ENCODE measurements at regions of chr3 and their contacts with region 1.

Region 1: DNA sequence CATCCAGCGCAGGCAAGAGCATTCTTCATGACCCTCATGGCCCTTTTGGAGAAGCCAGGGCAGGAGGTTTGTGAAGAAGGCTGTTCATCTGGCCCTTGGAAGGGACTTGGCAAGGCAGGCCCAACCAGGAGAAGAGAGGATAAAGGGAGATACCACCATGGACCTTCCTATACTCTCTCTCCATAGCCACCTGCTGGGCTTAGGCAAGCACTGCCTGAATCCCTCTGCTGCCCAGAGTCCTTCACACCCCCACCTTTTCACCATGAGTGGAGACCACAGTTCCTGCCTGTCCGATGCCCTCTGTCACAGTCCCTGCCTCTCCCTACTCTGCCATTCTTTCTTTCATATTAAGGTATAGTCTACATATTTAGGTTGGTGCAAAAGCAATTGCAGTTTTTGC is 10.6 kb upstream of the SFMBT1 start:
- DNase-seq: peak; percentile 50
- ATAC-seq: peak; percentile 98
- H3K4me3 ChIP-seq: no peak overlapping the region
- H3K27ac ChIP-seq: no peak overlapping the region
- H3K4me1 ChIP-seq: no peaks in the 10 kb centered on the region
- H3K27me3 ChIP-seq: no peaks in the 10 kb centered on the region
- CTCF ChIP-seq: peak; percentile 58

Region 2: GRCh38 chr3:52428151-52429005 is 628.1 kb before region 1 on chr3:
- CTCF ChIA-PET with region 1: no interaction called
- POLR2A ChIA-PET with region 1: interaction called, 15 read pairs
- intact Hi-C with region 1: no loop called
- DNase-seq: peak; percentile 82
- ATAC-seq: peak; percentile 99
- H3K4me3 ChIP-seq: no peak overlapping the region
- H3K27ac ChIP-seq: no peak overlapping the region
- H3K4me1 ChIP-seq: no peaks in the 10 kb centered on the region
- H3K27me3 ChIP-seq: no peaks in the 10 kb centered on the region
- CTCF ChIP-seq: peak; percentile 91

Region 3: GRCh38 chr3:52851348-52851747 is 205.1 kb before region 1 on chr3:
- CTCF ChIA-PET with region 1: no interaction called
- POLR2A ChIA-PET with region 1: no interaction called
- intact Hi-C with region 1: loop called (anchors 2 kb)
- DNase-seq: peak; percentile 51
- ATAC-seq: peak; percentile 80
- H3K4me3 ChIP-seq: no peak overlapping the region
- H3K27ac ChIP-seq: no peak overlapping the region
- H3K4me1 ChIP-seq: no peaks in the 10 kb centered on the region
- H3K27me3 ChIP-seq: no peaks in the 10 kb centered on the region
- CTCF ChIP-seq: peak; percentile 73

Region 4: DNA sequence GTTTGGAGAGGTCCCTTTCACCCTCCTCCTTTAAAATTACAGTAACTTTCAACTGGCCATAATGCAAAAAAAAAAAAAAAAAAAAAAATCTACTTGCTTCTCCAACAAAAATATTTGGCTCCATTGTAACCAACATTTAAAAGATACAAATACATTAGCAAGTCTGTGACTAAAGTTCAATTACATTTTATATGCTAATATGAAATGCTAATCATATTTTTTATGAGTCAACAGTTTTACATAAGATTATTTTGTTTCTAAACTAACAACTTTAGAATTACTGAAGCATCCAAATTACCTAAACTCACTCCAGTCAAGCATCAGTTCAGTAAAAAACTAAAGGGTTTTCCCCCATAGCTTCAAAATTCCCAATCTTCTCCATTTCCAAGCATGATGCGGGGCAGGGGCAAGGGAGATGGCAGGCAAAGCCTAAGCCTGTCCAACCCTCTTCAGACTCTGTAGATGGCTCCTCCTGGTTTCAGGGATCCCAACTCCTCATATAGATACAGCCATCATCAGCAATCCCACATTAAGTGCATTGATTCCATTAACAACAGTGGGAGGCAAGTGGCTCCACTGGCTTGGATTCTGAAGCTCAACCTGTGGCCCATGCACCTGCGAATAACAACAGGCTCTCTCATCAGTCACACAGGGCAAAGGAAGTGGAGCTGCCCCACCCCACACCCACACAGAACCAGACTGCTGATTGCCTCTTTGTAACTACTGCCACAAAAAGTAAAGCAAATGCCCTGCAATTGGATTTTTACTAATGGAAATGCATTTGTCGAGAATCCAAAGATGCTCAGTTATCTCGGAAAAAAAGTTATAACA is 25.6 kb before region 1 on chr3:
- CTCF ChIA-PET with region 1: no interaction called
- POLR2A ChIA-PET with region 1: interaction called, 19 read pairs
- intact Hi-C with region 1: no loop called
- DNase-seq: no peak
- ATAC-seq: peak; percentile 64; the same call in 1 of the 2 replicates
- H3K4me3 ChIP-seq: no peak overlapping the region
- H3K27ac ChIP-seq: no peak overlapping the region
- H3K4me1 ChIP-seq: no peaks in the 10 kb centered on the region
- H3K27me3 ChIP-seq: no peaks in the 10 kb centered on the region
- CTCF ChIP-seq: no peak

Region 5: DNA sequence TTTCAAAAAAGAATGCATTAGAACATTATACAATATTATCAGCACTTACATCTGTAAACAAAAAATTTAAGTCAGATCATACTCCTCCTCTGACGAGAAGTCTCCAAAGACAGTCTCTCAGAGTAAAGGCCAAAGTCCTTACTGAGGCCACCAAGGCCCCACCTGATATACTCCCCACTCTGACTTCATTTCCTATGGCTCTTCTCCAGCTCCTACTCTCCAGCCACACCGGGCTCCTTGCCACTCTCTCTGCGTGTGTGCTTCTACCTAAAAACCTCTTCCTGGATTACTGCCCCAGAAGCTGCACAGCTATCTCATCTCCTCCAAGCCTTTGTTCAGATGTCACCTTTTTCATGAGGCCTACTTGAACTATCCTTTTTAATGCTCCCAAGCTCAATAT is 285.9 kb after region 1 on chr3:
- CTCF ChIA-PET with region 1: no interaction called
- POLR2A ChIA-PET with region 1: no interaction called
- intact Hi-C with region 1: no loop called
- DNase-seq: no peak
- ATAC-seq: peak; percentile 29
- H3K4me3 ChIP-seq: no peak overlapping the region
- H3K27ac ChIP-seq: no peak overlapping the region
- H3K4me1 ChIP-seq: peaks cover 16% of the 10 kb centered on the region
- H3K27me3 ChIP-seq: no peaks in the 10 kb centered on the region
- CTCF ChIP-seq: no peak